Endothelial cell of umbilical vein (primary cell): ENCODE measurements at regions of chr1 and their contacts with region 1.

Region 1: DNA sequence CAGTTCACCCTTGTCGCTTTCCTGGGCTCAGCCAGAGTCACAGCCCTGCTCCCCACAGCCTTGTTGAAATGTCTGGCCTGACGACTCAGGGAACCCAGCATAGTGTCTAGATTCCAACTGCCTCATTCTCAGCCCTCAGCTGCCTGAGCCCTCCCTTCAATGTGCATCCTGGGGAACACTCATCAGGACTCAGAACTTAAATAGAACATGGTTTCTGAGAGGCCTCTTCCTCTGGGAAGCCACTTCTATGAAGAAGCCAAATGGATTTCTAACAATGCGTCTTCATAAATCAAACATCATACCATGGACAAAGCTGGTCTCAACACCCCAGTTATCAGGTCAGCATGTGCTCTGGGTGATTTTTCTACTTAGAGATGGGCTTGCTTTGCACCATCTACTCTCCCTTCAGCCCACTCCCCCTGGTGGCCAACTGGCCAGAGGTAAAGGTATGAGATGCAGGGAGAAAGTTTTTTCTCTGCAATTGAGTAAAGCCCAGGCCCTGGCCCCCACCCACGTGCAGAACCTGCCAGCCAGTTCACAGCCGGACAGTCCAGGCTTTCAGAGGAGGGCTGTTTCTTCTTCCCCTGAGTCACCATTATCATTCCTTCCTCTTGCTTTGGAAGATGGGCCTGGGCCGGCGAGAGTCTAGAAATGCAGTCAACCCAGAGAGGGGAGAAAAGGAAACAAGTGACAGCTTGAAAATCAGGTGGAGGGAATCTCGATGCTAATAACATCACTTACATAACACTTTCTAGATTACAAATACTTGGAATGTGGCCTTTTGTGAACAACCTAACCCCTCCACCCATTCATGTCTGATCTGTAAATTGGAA is 32.1 kb downstream of the CD244 start:
- DNase-seq: peak; percentile 35
- H3K4me3 ChIP-seq: no peak overlapping the region
- H3K27ac ChIP-seq: no peak overlapping the region
- H3K4me1 ChIP-seq: no peaks in the 10 kb centered on the region
- H3K27me3 ChIP-seq: no peaks in the 10 kb centered on the region
- CTCF ChIP-seq: peak; percentile 48 to 70
- POLR2A ChIP-seq: no peak

Region 2: GRCh38 chr1:160675641-160676410 is 154.7 kb before region 1 on chr1:
- CTCF ChIA-PET with region 1: interaction called, 6 read pairs
- POLR2A ChIA-PET with region 1: no interaction called
- dilution Hi-C with region 1: no loop called
- intact Hi-C with region 1: loop called (anchors 2 kb)
- DNase-seq: peak; percentile 53
- H3K4me3 ChIP-seq: no peak overlapping the region
- H3K27ac ChIP-seq: no peak overlapping the region
- H3K4me1 ChIP-seq: no peaks in the 10 kb centered on the region
- H3K27me3 ChIP-seq: peaks cover 0 to 3% of the 10 kb centered on the region in 2 experiments
- CTCF ChIP-seq: peak; percentile 69 to 80
- POLR2A ChIP-seq: no peak

Region 3: DNA sequence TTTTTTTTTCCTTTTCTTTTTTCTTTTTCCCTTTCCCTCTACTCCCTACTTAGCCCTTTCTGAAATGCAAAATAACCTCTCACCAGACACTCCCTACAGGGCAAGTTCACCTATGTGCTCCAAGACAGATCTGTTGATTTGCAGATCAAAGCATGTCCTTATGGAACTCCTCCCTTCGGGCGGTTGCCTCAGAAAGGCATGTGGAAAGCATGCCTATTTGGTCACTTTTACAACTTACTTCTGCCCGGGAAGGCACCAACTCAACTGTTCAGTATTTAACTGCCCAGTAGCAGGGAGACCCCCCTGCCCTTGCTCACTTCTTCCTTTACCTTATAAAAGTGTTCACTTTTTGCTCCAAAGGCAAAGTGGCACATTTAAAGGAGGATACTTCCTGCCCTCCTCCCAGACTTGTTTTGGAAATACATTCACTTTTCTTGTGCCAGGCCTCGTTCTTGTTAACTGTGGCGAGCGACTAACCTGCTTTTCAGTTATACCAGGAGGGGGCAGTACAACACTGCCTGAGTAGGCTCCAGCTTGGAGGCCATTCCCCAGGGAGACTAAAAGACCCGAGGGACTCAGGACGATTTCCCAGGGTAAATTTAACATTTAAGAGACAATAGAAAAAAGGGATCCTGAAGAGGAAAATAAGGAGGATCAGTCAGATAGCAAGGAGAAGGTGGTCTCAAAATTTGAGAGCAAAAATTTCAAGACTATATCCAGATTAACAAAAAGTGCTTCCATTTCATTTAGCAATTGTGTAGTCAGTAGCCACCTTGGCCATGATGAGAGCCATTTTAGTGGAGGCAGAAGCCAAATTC is 103.8 kb before region 1 on chr1:
- CTCF ChIA-PET with region 1: interaction called, 22 read pairs
- POLR2A ChIA-PET with region 1: no interaction called
- dilution Hi-C with region 1: no loop called
- intact Hi-C with region 1: loop called (anchors 1 kb)
- DNase-seq: peak; percentile 68
- H3K4me3 ChIP-seq: no peak overlapping the region
- H3K27ac ChIP-seq: no peak overlapping the region
- H3K4me1 ChIP-seq: no peaks in the 10 kb centered on the region
- H3K27me3 ChIP-seq: no peaks in the 10 kb centered on the region
- CTCF ChIP-seq: peak; percentile 76 to 77
- POLR2A ChIP-seq: no peak

Region 4: GRCh38 chr1:160901768-160902167 is 71.2 kb after region 1 on chr1:
- CTCF ChIA-PET with region 1: no interaction called
- POLR2A ChIA-PET with region 1: no interaction called
- dilution Hi-C with region 1: no loop called
- intact Hi-C with region 1: no loop called
- DNase-seq: no peak
- H3K4me3 ChIP-seq: no peak overlapping the region
- H3K27ac ChIP-seq: no peak overlapping the region
- H3K4me1 ChIP-seq: no peaks in the 10 kb centered on the region
- H3K27me3 ChIP-seq: no peaks in the 10 kb centered on the region
- CTCF ChIP-seq: no peak
- POLR2A ChIP-seq: no peak